ENCODE measurements at regions of chr1 and their contacts with region 1.

Region 1: DNA sequence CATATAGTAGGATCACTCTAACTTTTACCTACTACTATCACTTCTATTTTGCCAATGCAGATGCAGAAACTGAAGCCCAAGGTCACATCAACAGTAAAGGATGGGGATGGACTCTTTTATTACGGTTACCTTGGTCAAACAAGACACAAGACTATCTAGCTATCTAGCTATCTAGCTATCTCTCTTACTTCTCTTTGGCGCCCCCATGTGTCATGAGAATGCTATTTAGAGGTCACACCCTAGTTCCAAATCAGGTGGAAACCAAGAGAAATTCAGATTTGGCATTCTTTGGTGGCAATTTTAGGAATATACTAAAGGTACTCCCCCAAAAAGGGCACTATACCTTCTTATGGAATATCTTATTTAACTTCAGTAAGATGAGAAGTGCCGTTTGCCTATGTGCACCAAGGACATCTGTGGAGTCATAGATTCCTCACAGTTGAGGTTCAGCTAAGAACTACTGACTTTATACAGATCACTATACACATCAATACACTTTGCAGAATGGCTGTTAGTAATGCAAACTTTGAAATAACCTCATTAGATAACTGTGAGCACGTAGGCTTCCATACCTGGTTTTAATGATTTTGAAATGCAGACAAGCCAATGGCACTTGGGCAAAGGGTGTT is 6.7 kb downstream of the ZNF648 start:
- DNase-seq: peak; percentile 79
- ATAC-seq: peak; percentile 68
- H3K4me3 Mint-ChIP-seq: no peak overlapping the region
- H3K27ac Mint-ChIP-seq: no peak overlapping the region
- H3K4me1 Mint-ChIP-seq: no peaks in the 10 kb centered on the region
- H3K27me3 Mint-ChIP-seq: peaks cover 22% of the 10 kb centered on the region
- CTCF ChIP-seq: peak; percentile 74

Region 2: GRCh38 chr1:181969902-181970301 is 84.9 kb before region 1 on chr1:
- CTCF ChIA-PET with region 1: interaction called, 10 read pairs
- POLR2A ChIA-PET with region 1: no interaction called
- intact Hi-C with region 1: no loop called
- DNase-seq: no peak
- ATAC-seq: no peak
- H3K4me3 Mint-ChIP-seq: no peak overlapping the region
- H3K27ac Mint-ChIP-seq: no peak overlapping the region
- H3K4me1 Mint-ChIP-seq: no peaks in the 10 kb centered on the region
- H3K27me3 Mint-ChIP-seq: peaks cover 12% of the 10 kb centered on the region
- CTCF ChIP-seq: no peak

Region 3: GRCh38 chr1:182069028-182069466 is 14.2 kb after region 1 on chr1:
- CTCF ChIA-PET with region 1: interaction called, 10 read pairs
- POLR2A ChIA-PET with region 1: no interaction called
- intact Hi-C with region 1: no loop called
- DNase-seq: peak; percentile 43
- ATAC-seq: peak; percentile 89
- H3K4me3 Mint-ChIP-seq: no peak overlapping the region
- H3K27ac Mint-ChIP-seq: no peak overlapping the region
- H3K4me1 Mint-ChIP-seq: peaks cover 2% of the 10 kb centered on the region
- H3K27me3 Mint-ChIP-seq: peaks cover 15% of the 10 kb centered on the region
- CTCF ChIP-seq: peak; percentile 51

Measured in activated CD8-positive, alpha-beta T cell treated with anti-CD3 and anti-CD28 coated beads for 36 hours (primary cell).